ENCODE measurements at regions of chr17 and their contacts with region 1.

Region 1: DNA sequence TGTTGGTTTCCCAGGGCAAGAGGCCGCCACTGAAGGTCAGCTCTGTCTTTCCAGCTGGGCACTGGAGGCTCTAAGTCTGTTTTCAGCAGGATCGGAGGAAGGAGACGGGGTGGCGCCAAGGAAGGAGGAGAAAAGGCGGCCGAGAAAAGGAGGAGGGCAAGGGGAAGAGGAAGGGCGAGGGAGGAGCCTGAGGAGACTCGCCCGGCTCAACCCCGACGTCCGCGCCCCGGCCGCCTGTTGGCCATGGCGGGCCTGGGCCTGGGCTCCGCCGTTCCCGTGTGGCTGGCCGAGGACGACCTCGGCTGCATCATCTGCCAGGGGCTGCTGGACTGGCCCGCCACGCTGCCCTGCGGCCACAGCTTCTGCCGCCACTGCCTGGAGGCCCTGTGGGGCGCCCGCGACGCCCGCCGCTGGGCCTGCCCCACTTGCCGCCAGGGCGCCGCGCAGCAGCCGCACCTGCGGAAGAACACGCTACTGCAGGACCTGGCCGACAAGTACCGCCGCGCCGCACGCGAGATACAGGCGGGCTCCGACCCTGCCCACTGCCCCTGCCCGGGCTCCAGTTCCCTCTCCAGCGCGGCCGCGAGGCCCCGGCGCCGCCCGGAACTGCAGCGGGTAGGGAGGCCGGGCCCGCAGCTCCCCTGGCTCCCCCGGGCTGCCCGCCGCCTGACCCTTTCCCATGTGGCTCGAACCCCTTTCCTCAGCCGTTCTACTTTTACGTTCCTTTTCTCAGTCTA is at the start of gene RNF135:
- DNase-seq: peak; percentile 89 to 91 (median 90)
- ATAC-seq: peak; percentile 87 to 98 (median 97)
- H3K4me3 ChIP-seq: peak within 1 kb of the TSS; percentile 56 to 95 (median 76)
- H3K27ac ChIP-seq: peak within 1 kb of the TSS; percentile 75 to 98 (median 91)
- H3K4me1 ChIP-seq: peaks cover 0 to 66% (median 6%) of the 10 kb centered on the region in 12 donors
- H3K27me3 ChIP-seq: no peaks in the 10 kb centered on the region
- CTCF ChIP-seq: peak in 7 of 12 donors; percentile 4 to 54 (median 46)
- POLR2A ChIP-seq: peak in 1 of 2 donors; percentile 80
- total RNA-seq, gene RNF135: 3.9 to 19.1 (median 5.6) TPM

Region 2: DNA sequence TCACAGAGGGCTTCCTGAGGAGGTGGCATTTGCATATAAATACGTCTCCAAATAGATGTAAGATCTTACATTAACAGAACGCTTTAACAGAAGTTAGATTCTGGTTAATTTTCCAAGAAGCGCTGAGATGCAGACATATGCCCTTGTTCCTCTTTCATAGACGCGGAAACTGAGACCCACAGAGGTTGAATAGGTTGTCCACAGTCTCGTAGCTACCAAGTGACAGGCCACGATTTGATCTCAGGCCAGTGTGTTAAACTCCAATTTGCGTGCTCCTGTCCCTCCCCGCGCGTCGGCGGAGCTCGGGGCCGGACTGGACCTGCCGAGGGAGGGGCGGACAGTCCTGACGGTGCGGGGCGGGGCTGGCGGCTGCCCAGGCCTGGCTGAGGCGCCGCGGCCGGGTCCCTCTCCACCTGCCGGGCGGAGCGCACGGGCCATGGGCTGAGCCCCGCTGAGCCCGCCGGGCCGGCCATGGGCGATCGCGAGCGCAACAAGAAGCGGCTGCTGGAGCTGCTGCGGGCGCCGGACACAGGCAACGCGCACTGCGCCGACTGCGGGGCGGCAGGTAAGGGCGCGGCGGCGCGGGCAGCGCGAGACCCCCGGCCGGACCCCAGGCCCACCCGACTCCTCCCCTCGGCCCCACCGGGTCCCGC is 49.3 kb before region 1 on chr17 and contains the start of gene ADAP2:
- intact Hi-C with region 1: loop called in 2 of 10 experiments (anchors 5 kb)
- DNase-seq: peak; percentile 62 to 87 (median 74)
- ATAC-seq: peak in 3 of 4 donors; percentile 80 to 90 (median 89)
- H3K4me3 ChIP-seq: peak within 1 kb of the TSS; percentile 16 to 75 (median 60)
- H3K27ac ChIP-seq: peak within 1 kb of the TSS in 11 of 12 donors; percentile 49 to 86 (median 69)
- H3K4me1 ChIP-seq: peaks cover 0 to 24% (median 6%) of the 10 kb centered on the region in 12 donors
- H3K27me3 ChIP-seq: peaks cover 0 to 41% (median 18%) of the 10 kb centered on the region in 9 donors
- CTCF ChIP-seq: no peak
- POLR2A ChIP-seq: peak in 1 of 2 donors; percentile 40
- total RNA-seq, gene ADAP2: 3.1 to 43.5 (median 8.3) TPM

Measured in heart left ventricle (tissue), 16 donors.